ENCODE measurements at regions of chr12 and their contacts with region 1.

Region 1: DNA sequence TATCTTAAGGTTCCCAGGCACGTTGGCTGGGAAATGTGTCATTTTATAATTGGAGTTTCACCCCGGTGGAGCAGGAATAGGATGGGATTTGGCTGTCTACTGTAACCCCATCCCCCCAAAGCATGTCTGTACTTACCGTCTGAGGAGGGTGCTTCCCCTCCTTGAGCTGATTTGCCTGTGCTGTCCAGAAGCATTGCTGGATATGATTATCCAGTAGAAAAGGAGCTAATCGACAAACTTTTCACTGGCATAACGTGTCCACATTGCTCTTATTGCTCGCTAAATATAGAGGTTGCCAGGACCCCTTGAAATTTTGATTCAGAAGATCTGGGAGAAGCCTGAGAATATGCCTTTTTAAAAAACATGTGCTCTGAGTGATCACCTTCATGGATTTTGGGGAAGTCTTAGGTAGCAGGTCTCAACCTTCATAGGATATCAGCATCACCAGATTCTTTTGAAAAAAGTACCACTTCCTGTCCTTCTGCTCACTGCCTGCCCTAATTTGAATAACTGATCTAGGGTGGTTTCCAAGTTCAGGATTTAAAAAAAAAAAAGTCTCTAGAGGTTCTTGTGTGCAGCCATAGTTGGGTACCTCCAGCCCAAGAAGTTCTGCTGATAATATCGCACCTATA is 80.4 kb upstream of the KCNA1 start:
- DNase-seq: peak; percentile 17
- H3K4me3 Mint-ChIP-seq: peak overlapping the region; percentile 92
- H3K27ac Mint-ChIP-seq: peak overlapping the region; percentile 99
- H3K4me1 Mint-ChIP-seq: peaks cover 77% of the 10 kb centered on the region
- H3K27me3 Mint-ChIP-seq: no peaks in the 10 kb centered on the region

Region 2: GRCh38 chr12:4847713-4848112 is 18.4 kb after region 1 on chr12:
- intact Hi-C with region 1: loop called (anchors 1 kb)
- DNase-seq: no peak
- H3K4me3 Mint-ChIP-seq: no peak overlapping the region
- H3K27ac Mint-ChIP-seq: no peak overlapping the region
- H3K4me1 Mint-ChIP-seq: peaks cover under 1% of the 10 kb centered on the region
- H3K27me3 Mint-ChIP-seq: peaks cover 13% of the 10 kb centered on the region